Gastrocnemius medialis (tissue), 4 donors: ENCODE measurements at regions of chr6 and their contacts with region 1.

Region 1: GRCh38 chr6:136792410-136793262 is at the start of gene MAP3K5:
- DNase-seq: peak; percentile 74 to 84
- ATAC-seq: peak; percentile 73 to 80
- H3K4me3 ChIP-seq: peak within 1 kb of the TSS; percentile 69 to 98 (median 84)
- H3K27ac ChIP-seq: peak within 1 kb of the TSS; percentile 89 to 97 (median 93)
- H3K4me1 ChIP-seq: peaks cover 8 to 28% of the 10 kb centered on the region in 2 donors
- H3K27me3 ChIP-seq: no peaks in the 10 kb centered on the region
- CTCF ChIP-seq: peak; percentile 55 to 81 (median 65)
- POLR2A ChIP-seq: peak in 1 of 2 donors; percentile 40
- total RNA-seq, gene MAP3K5: 2.9 to 46.9 (median 4.9) TPM

Region 2: DNA sequence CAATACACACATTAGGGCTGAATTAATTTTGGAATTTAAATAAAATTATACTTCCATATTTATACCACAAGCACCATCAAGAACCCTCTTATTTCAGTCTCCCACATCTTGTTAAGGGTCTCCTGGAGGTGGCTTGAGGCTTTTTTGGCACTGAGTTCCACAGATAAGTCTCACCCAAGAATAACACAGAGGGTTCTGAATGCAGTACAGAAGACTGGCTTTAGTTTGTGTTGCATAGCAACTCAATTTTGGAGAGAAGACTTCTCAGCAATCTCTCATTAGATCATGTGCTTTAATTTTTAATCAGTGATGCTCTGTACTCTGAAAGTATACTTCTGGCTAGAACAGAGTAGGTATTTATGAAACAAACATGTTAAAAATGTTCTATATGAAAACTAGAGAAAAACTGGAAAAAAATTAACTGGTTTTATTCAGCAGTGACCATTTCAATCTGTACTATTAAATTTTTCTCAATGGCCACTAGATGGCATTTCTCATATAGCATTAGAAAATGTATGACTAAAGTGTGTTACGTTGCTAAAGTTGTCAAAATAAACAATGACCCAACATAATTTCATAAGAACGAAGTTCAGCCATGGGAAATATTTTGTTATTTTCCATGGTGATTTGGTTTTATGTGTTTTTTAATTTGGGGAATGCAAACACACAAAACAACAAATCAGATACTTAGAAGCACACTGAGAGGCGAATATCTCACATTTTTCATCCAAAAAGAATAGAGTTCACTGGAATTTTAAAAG is 209.7 kb before region 1 on chr6:
- in situ Hi-C with region 1: loop called in 1 of 4 experiments (anchors 5 kb)
- intact Hi-C with region 1: loop called (anchors 1 kb)
- DNase-seq: no peak
- ATAC-seq: peak; percentile 50 to 69
- H3K4me3 ChIP-seq: no peak overlapping the region
- H3K27ac ChIP-seq: peak overlapping the region in 2 of 4 donors; percentile 9 to 53
- H3K4me1 ChIP-seq: peaks cover 30 to 38% of the 10 kb centered on the region in 2 donors
- H3K27me3 ChIP-seq: no peaks in the 10 kb centered on the region
- CTCF ChIP-seq: peak; percentile 41 to 62 (median 45)
- POLR2A ChIP-seq: no peak

Region 3: DNA sequence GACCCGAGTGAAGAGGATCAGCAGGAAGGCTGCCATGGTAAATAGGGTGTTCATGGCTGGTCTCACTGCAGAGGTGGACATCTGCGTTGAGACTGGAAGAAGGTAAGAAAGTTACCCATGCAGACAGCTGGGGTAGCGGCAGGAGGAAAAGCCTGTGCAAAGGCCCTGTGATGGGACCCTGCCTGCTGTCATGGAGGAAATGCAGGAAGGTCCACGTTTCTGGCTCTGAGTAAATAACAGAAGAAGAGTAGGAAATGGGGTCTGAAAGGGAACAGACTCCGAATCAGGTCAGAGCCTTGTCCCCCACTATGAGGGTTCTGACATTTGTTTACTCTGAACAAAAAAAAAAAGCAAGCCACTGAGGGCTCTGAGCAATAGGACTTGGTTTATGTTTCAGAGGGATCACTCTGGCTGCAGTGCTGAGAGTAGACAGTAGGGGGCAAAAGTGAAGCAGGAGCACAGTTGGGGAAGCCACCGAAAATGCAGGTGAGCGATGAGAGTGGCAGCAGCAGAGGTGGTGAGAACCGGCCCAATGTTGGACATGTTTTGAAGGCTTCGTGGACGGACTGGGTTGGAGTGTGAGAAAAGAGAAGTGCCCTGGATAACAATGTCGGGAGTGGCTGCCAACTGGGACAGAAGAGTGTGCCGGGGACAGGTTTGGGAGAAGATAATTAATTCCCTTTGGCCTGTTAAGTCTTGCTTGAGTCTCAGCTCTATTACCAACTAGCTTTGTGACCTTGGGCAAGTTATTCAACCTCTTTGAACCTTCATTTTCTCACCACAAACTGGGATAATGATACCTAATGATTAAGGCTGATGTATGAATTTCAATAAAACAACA is 184.5 kb before region 1 on chr6:
- in situ Hi-C with region 1: no loop called
- intact Hi-C with region 1: loop called (anchors 1 kb)
- DNase-seq: peak in 1 of 2 donors; percentile 53
- ATAC-seq: peak; percentile 82
- H3K4me3 ChIP-seq: no peak overlapping the region
- H3K27ac ChIP-seq: no peak overlapping the region
- H3K4me1 ChIP-seq: peaks cover 0 to 5% of the 10 kb centered on the region in 2 donors
- H3K27me3 ChIP-seq: no peaks in the 10 kb centered on the region
- CTCF ChIP-seq: peak; percentile 23 to 77 (median 71)
- POLR2A ChIP-seq: no peak

Region 4: DNA sequence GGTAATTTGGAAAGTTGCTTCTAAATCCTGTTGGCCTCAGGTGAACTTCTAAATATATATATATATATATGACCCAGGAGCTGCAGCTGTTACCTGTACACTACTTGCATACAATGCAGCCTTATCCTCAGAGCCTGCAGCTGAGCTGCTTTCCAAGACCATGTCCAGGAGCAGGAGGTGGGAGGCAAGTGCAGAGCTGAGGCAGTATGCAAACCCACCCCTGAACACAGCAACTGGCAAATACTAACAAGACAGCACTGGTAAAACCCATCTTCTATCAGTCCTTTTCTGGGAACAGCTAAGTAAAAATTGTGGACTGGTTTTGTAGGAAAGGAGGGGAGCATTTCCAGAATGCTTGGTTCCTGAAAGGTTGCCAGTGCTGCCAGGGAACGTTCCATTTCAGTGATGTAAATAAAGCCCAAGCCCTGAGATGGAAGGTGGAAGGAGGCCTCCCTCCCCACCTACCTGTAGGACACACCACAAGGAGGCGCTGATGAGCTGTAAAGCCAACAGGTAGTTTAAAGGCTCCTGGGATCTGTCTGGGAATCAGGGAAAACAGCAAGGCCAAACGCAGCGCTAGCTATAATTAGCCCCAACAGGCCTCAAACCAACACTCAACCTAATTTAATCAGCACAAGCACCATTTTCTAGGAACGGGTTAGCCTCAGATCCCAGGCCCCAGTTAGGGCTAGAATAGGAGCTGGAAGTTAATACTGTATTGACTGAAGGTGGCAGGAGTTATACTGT is 148.6 kb before region 1 on chr6:
- in situ Hi-C with region 1: loop called (anchors 5 to 10 kb)
- intact Hi-C with region 1: loop called (anchors 1 kb)
- DNase-seq: peak; percentile 67 to 75
- ATAC-seq: peak; percentile 92 to 95
- H3K4me3 ChIP-seq: no peak overlapping the region
- H3K27ac ChIP-seq: peak overlapping the region in 2 of 4 donors; percentile 40 to 65
- H3K4me1 ChIP-seq: peaks cover 8 to 29% of the 10 kb centered on the region in 2 donors
- H3K27me3 ChIP-seq: no peaks in the 10 kb centered on the region
- CTCF ChIP-seq: peak; percentile 61 to 89 (median 82)
- POLR2A ChIP-seq: no peak

Region 5: DNA sequence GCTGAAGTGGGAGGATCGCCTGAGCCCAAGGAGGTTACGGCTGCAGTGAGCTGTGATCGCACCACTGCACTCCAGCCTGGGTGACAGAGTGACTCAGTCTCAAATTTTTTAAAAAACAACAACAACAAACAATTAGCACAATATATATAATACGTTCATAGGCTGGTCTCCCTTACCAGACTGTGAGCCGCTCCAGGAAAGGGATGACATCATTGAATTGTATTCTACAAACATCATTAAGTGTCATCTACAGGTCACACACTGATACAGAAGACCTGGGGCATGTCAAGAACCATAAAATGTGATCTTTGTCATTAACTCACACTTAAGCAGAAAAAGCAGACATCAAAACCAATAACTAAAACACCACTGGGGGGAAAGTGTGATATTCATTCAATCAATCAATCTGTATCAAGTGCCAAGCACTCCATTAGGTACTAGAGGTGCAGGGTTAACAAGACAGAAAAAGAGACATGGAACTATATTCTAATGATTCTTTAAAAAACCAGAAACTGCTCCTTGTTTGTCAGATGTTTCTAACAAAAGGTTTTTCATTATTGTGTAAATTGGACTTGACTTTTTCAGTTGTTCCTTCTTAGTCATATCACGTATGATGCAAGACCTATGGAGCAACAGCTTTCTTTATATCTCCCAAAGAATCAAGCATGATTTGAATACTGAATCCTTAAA is 18.1 kb before region 1 on chr6:
- in situ Hi-C with region 1: no loop called
- intact Hi-C with region 1: loop called (anchors 2 kb)
- DNase-seq: no peak
- ATAC-seq: peak; percentile 56 to 59
- H3K4me3 ChIP-seq: no peak overlapping the region
- H3K27ac ChIP-seq: peak overlapping the region in 2 of 4 donors; percentile 27 to 60
- H3K4me1 ChIP-seq: peaks cover 23 to 44% of the 10 kb centered on the region in 2 donors
- H3K27me3 ChIP-seq: no peaks in the 10 kb centered on the region
- CTCF ChIP-seq: no peak
- POLR2A ChIP-seq: no peak

Region 6: DNA sequence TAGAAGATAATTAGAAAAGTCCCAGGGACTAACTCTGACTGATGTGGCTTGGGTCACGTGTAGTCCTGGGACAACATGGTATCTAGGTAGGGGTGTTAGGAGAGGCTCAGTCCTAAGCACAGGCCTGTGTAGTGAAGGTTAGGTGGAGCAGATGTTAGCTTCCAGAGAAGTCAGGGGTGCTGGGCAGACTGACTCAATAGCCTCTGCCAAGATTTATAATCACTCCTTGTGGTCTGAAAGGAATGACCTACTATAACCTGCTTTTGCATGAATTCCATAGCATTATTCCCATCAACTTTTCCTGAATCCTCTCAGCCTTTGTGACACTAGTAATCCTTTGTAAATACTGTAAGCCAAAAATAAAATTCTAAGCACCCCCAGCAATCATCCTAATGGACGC is 19.5 kb after region 1 on chr6:
- in situ Hi-C with region 1: no loop called
- intact Hi-C with region 1: no loop called
- DNase-seq: no peak
- ATAC-seq: no peak
- H3K4me3 ChIP-seq: no peak overlapping the region
- H3K27ac ChIP-seq: no peak overlapping the region
- H3K4me1 ChIP-seq: no peaks in the 10 kb centered on the region
- H3K27me3 ChIP-seq: no peaks in the 10 kb centered on the region
- CTCF ChIP-seq: no peak
- POLR2A ChIP-seq: no peak

Region 7: GRCh38 chr6:136822376-136823127 is 29.9 kb after region 1 on chr6 and contains the start of gene PEX7:
- in situ Hi-C with region 1: no loop called
- intact Hi-C with region 1: loop called (anchors 2 kb)
- DNase-seq: peak; percentile 86
- ATAC-seq: peak; percentile 96 to 97
- H3K4me3 ChIP-seq: peak within 1 kb of the TSS; percentile 67 to 77 (median 72)
- H3K27ac ChIP-seq: peak within 1 kb of the TSS; percentile 76 to 92 (median 91)
- H3K4me1 ChIP-seq: peaks cover 20 to 27% of the 10 kb centered on the region in 2 donors
- H3K27me3 ChIP-seq: no peaks in the 10 kb centered on the region
- CTCF ChIP-seq: peak; percentile 56 to 79 (median 63)
- POLR2A ChIP-seq: peak; percentile 59 to 62
- total RNA-seq, gene PEX7: 0.32 to 10.6 (median 6.0) TPM

Region 8: GRCh38 chr6:136983687-136984086 is 191.1 kb after region 1 on chr6:
- in situ Hi-C with region 1: no loop called
- intact Hi-C with region 1: no loop called
- DNase-seq: no peak
- ATAC-seq: no peak
- H3K4me3 ChIP-seq: no peak overlapping the region
- H3K27ac ChIP-seq: no peak overlapping the region
- H3K4me1 ChIP-seq: no peaks in the 10 kb centered on the region
- H3K27me3 ChIP-seq: peaks cover 0 to 8% (median 2%) of the 10 kb centered on the region in 3 donors
- CTCF ChIP-seq: no peak
- POLR2A ChIP-seq: no peak